ENCODE measurements at regions of chr9 and their contacts with region 1.

Region 1: GRCh38 chr9:77163884-77164283 is 13.4 kb upstream of the VPS13A start:
- DNase-seq: no peak
- H3K4me3 ChIP-seq: no peak overlapping the region
- H3K4me3 Mint-ChIP-seq: no peak overlapping the region
- H3K27ac ChIP-seq: no peak overlapping the region
- H3K27ac Mint-ChIP-seq: no peak overlapping the region
- H3K4me1 ChIP-seq: no peaks in the 10 kb centered on the region
- H3K4me1 Mint-ChIP-seq: peaks cover 0 to 4% (median 2%) of the 10 kb centered on the region in 4 donors
- H3K27me3 ChIP-seq: no peaks in the 10 kb centered on the region
- H3K27me3 Mint-ChIP-seq: peaks cover 5 to 7% of the 10 kb centered on the region in 2 donors

Region 2: DNA sequence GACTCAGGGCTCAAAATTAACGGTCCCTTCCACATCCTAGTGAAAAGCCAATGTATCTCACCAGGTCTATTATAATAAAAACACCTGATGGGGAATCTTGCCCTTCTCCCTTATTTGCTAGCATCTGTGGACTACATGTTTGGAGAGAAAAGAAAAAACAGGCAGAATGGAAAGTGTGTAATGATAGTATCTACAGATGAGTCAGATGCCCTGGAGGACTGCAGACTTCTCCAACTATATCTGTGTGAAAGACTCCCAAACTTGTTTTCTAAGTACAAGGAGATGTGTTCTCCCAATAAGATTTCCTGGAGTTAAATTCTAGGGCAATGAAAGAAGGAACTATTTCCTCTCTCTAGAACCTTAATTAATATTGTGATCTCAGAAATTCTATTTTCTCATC is 78.5 kb before region 1 on chr9:
- CTCF ChIA-PET with region 1: no interaction called
- POLR2A ChIA-PET with region 1: no interaction called
- intact Hi-C with region 1: no loop called
- DNase-seq: no peak
- H3K4me3 ChIP-seq: no peak overlapping the region
- H3K4me3 Mint-ChIP-seq: no peak overlapping the region
- H3K27ac ChIP-seq: no peak overlapping the region
- H3K27ac Mint-ChIP-seq: no peak overlapping the region
- H3K4me1 ChIP-seq: no peaks in the 10 kb centered on the region
- H3K4me1 Mint-ChIP-seq: no peaks in the 10 kb centered on the region
- H3K27me3 ChIP-seq: no peaks in the 10 kb centered on the region
- H3K27me3 Mint-ChIP-seq: peaks cover under 1 to 2% of the 10 kb centered on the region in 2 donors

Region 3: DNA sequence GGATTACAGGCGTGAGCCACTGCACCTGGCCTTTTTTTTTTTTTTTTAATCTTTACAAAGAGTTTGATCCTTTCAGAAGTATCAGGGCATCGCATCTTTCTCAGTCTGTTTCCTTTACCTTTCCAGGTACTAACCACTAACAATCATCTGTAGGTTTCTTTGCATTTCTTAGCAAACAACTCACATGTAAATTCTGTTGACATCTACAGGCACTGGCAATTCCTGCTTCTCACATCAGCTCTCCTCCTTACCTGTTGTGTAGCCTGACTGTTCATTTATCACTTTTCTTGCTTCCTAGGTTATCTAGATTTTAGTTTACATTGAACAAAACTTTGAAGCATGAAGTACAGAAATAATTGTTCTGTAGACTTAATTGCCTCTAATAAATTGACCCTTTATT is 14.0 kb before region 1 on chr9:
- CTCF ChIA-PET with region 1: interaction called, 32 read pairs
- POLR2A ChIA-PET with region 1: no interaction called
- intact Hi-C with region 1: no loop called
- DNase-seq: no peak
- H3K4me3 ChIP-seq: no peak overlapping the region
- H3K4me3 Mint-ChIP-seq: no peak overlapping the region
- H3K27ac ChIP-seq: no peak overlapping the region
- H3K27ac Mint-ChIP-seq: no peak overlapping the region
- H3K4me1 ChIP-seq: no peaks in the 10 kb centered on the region
- H3K4me1 Mint-ChIP-seq: no peaks in the 10 kb centered on the region
- H3K27me3 ChIP-seq: no peaks in the 10 kb centered on the region
- H3K27me3 Mint-ChIP-seq: peaks cover 3 to 10% of the 10 kb centered on the region in 2 donors

Region 4: DNA sequence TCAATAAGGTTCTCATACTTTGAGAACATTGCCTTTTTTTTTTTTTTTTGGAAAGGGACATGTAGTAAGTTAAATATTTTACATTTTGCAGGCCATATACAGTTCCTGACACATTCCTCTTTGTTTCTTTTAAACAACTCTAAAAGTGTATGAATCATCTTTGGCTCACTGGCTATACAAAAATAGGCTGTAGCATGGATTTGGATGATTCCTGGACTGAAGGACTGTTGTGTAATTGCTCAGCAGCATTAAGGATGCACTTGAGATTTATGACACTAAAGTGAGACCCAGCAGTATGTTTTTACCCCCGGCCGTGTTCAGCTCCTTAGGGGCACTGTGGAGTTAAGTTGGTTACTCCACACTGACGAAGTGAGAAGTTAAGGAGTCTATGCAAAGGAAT is 54.7 kb after region 1 on chr9:
- CTCF ChIA-PET with region 1: interaction called, 12 read pairs
- POLR2A ChIA-PET with region 1: no interaction called
- intact Hi-C with region 1: no loop called
- DNase-seq: no peak
- H3K4me3 ChIP-seq: no peak overlapping the region
- H3K4me3 Mint-ChIP-seq: no peak overlapping the region
- H3K27ac ChIP-seq: no peak overlapping the region
- H3K27ac Mint-ChIP-seq: peak overlapping the region in 2 of 7 donors; percentile 13 to 65
- H3K4me1 ChIP-seq: no peaks in the 10 kb centered on the region
- H3K4me1 Mint-ChIP-seq: no peaks in the 10 kb centered on the region
- H3K27me3 ChIP-seq: no peaks in the 10 kb centered on the region
- H3K27me3 Mint-ChIP-seq: no peaks in the 10 kb centered on the region

Region 5: DNA sequence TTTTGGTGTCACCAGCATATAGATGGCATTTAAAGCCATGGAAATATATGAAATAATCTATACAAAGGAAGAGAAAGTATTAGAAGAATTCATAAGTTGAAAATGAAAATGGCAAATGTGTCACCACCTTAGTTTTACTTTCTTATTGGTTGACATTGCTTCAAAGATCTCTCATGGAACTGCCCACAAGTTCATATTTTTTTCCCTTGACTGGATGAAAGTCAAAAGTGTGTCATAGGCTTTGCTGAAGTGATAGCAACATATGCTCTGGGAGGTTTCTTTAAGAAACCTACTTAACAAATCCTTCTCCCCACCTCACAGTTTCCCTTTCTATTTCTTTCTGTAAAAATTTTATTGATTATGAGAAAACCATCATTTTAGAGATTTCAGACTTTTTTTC is 140.7 kb after region 1 on chr9:
- CTCF ChIA-PET with region 1: interaction called, 3 read pairs
- POLR2A ChIA-PET with region 1: no interaction called
- intact Hi-C with region 1: loop called (anchors 10 kb)
- DNase-seq: no peak
- H3K4me3 ChIP-seq: no peak overlapping the region
- H3K4me3 Mint-ChIP-seq: no peak overlapping the region
- H3K27ac ChIP-seq: no peak overlapping the region
- H3K27ac Mint-ChIP-seq: no peak overlapping the region
- H3K4me1 ChIP-seq: no peaks in the 10 kb centered on the region
- H3K4me1 Mint-ChIP-seq: no peaks in the 10 kb centered on the region
- H3K27me3 ChIP-seq: no peaks in the 10 kb centered on the region
- H3K27me3 Mint-ChIP-seq: no peaks in the 10 kb centered on the region

Region 6: DNA sequence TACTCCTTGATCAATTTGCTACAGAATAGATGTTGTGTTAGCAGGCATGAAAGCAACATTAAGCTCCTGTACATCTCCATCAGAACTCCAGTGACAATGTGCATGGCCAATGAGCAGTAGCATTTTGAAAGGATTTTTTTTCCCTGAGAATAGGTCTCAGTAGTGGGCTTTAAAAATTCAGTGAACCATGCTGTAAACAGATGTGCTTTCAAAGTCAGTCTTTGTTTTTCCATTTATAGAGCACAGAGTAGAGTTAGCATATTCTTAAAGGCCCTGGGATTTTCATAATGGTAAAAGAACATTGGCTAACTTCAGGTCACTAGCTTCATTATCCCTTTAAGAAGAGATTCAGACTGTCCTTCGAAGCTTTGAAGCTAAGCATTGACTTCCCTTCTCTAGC is 164.2 kb after region 1 on chr9:
- CTCF ChIA-PET with region 1: no interaction called
- POLR2A ChIA-PET with region 1: no interaction called
- intact Hi-C with region 1: loop called (anchors 5 kb)
- DNase-seq: no peak
- H3K4me3 ChIP-seq: no peak overlapping the region
- H3K4me3 Mint-ChIP-seq: no peak overlapping the region
- H3K27ac ChIP-seq: no peak overlapping the region
- H3K27ac Mint-ChIP-seq: peak overlapping the region in 1 of 7 donors; percentile 4
- H3K4me1 ChIP-seq: no peaks in the 10 kb centered on the region
- H3K4me1 Mint-ChIP-seq: peaks cover 0 to 2% (median 0%) of the 10 kb centered on the region in 4 donors
- H3K27me3 ChIP-seq: no peaks in the 10 kb centered on the region
- H3K27me3 Mint-ChIP-seq: no peaks in the 10 kb centered on the region